Uterus (tissue), 4 donors: ENCODE measurements at regions of chr19 and their contacts with region 1.

Region 1: DNA sequence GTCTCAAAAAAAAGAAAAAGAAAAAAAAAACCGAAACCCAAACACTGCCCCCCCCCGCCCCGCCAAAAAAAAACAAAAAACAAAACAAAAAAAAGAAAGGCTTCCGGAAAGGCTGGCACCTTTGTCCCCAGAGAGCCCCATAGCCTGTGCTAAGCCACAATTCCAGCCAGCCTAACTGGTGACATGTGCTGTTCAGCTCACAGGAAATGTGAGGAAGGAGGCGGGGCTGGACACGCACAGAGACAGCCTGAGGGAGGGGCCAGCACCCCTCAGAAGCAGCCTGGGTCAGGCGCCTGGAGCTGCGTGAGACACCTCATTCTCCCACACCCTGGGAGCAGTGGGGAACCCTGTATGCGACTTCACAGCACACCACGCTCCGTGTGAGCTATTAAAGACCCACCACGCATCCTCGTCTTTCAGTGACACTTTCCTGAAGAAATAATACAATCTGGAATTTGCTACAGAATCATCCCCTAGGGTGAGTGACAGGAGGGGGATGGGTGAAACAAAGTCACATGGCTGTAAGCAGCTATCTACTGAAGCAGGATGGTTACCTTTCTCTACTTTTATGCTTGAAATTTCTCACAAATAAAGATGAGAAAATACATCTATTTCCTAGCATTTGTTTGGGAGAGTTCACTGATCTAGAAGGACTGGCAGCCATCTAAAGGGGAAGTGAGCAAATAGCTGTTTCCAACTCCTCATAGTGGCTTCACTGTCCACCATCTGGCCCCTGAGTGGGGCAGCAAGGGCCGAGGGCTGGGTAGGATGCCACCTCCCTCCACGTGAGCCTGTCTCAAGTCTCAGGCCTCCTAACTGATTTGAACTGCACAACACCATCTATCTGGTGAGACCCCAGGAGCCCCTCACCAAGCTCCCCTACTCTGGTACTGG is 12.3 kb upstream of the SLC35E1 start:
- DNase-seq: peak; percentile 74 to 78
- H3K4me3 ChIP-seq: no peak overlapping the region
- H3K27ac ChIP-seq: peak overlapping the region; percentile 51 to 54
- H3K4me1 ChIP-seq: peaks cover 16 to 35% of the 10 kb centered on the region in 2 donors
- H3K27me3 ChIP-seq: no peaks in the 10 kb centered on the region
- CTCF ChIP-seq: peak in 1 of 4 experiments; percentile 8
- POLR2A ChIP-seq: peak; percentile 27 to 31

Region 2: GRCh38 chr19:16470911-16471811 is 113.3 kb before region 1 on chr19:
- intact Hi-C with region 1: no loop called
- DNase-seq: no peak
- H3K4me3 ChIP-seq: peak overlapping the region; percentile 59 to 99
- H3K27ac ChIP-seq: peak overlapping the region; percentile 74 to 86
- H3K4me1 ChIP-seq: no peaks in the 10 kb centered on the region
- H3K27me3 ChIP-seq: no peaks in the 10 kb centered on the region
- CTCF ChIP-seq: no peak
- POLR2A ChIP-seq: no peak

Region 3: GRCh38 chr19:16628183-16628983 is 43.9 kb after region 1 on chr19 and contains the start of gene MED26:
- intact Hi-C with region 1: loop called (anchors 5 kb)
- DNase-seq: peak; percentile 93 to 95
- H3K4me3 ChIP-seq: peak within 1 kb of the TSS; percentile 77 to 92
- H3K27ac ChIP-seq: peak within 1 kb of the TSS; percentile 91 to 94
- H3K4me1 ChIP-seq: peaks cover 0 to 7% of the 10 kb centered on the region in 2 donors
- H3K27me3 ChIP-seq: no peaks in the 10 kb centered on the region
- CTCF ChIP-seq: peak in 3 of 4 experiments; percentile 5 to 54 (median 38)
- POLR2A ChIP-seq: peak; percentile 67 to 85
- total RNA-seq, gene MED26: 1.5 to 13.5 (median 3.6) TPM